Ascending aorta (tissue), 2 donors: ENCODE measurements at regions of chr4 and their contacts with region 1.

Region 1: GRCh38 chr4:25030277-25031076 is at the start of gene LGI2:
- DNase-seq: peak; percentile 11 to 79
- H3K4me3 ChIP-seq: peak within 1 kb of the TSS; percentile 66 to 73
- H3K27ac ChIP-seq: peak within 1 kb of the TSS in 1 of 2 donors; percentile 66
- H3K4me1 ChIP-seq: peaks cover 0 to 4% of the 10 kb centered on the region in 2 donors
- H3K27me3 ChIP-seq: no peaks in the 10 kb centered on the region
- CTCF ChIP-seq: no peak
- total RNA-seq, gene LGI2: 2.2 TPM

Region 2: GRCh38 chr4:25060963-25061340 is 30.5 kb after region 1 on chr4:
- intact Hi-C with region 1: loop called (anchors 2 kb)
- DNase-seq: peak in 1 of 2 donors; percentile 58
- H3K4me3 ChIP-seq: no peak overlapping the region
- H3K27ac ChIP-seq: peak overlapping the region; percentile 77
- H3K4me1 ChIP-seq: peaks cover 0 to 7% of the 10 kb centered on the region in 2 donors
- H3K27me3 ChIP-seq: no peaks in the 10 kb centered on the region
- CTCF ChIP-seq: no peak